ENCODE measurements at regions of chr1 and their contacts with region 1.

Region 1: GRCh38 chr1:235077571-235078479 is 50.8 kb downstream of the TOMM20 start:
- DNase-seq: peak; percentile 92
- ATAC-seq: peak; percentile 80
- H3K4me3 Mint-ChIP-seq: peak overlapping the region; percentile 10
- H3K27ac Mint-ChIP-seq: no peak overlapping the region
- H3K4me1 Mint-ChIP-seq: peaks cover 35% of the 10 kb centered on the region
- H3K27me3 Mint-ChIP-seq: no peaks in the 10 kb centered on the region

Region 2: DNA sequence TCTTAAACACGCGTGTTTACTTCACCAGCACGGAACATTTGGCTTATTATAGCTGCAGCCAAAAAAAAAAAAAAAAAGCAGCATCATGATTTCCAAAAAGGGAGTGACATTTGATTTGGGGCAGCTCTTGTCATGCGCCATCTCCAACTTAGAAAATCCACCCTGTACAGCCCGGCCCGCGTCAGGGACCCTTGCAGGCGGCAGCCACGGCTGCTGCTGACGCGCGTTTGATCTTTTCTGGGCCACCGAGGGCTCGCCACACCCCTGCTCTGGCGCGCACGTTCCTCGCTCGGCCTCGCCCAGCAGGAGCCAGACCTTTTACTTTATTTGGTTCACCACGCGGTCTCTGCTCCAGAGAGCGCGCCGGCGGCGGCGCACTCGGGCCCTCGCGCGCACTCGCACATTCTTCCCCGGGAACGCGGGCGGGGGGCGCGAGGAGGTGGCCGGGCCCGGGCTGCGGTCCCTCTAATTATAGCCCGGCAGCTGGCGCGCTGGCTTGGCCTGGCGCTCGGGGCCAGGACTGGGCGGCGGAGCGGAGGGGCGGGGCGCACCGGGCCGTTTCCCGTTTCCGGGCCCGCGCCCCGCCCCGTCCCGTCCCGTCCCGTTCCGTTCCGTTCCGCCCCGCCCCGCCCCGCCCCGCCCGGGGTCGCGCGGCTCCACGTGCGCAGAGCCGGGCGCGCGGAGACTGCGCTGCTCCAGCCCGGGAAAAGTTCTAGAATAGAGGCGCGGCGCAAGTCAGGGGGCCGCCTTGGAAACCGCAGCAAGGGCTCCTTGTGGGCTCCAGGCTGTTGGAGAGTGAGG is 478.0 kb before region 1 on chr1:
- CTCF ChIA-PET with region 1: interaction called, 38 read pairs
- DNase-seq: peak; percentile 84
- ATAC-seq: peak; percentile 81
- H3K4me3 Mint-ChIP-seq: peak overlapping the region; percentile 85
- H3K27ac Mint-ChIP-seq: peak overlapping the region; percentile 94
- H3K4me1 Mint-ChIP-seq: peaks cover 55% of the 10 kb centered on the region
- H3K27me3 Mint-ChIP-seq: no peaks in the 10 kb centered on the region

Region 3: DNA sequence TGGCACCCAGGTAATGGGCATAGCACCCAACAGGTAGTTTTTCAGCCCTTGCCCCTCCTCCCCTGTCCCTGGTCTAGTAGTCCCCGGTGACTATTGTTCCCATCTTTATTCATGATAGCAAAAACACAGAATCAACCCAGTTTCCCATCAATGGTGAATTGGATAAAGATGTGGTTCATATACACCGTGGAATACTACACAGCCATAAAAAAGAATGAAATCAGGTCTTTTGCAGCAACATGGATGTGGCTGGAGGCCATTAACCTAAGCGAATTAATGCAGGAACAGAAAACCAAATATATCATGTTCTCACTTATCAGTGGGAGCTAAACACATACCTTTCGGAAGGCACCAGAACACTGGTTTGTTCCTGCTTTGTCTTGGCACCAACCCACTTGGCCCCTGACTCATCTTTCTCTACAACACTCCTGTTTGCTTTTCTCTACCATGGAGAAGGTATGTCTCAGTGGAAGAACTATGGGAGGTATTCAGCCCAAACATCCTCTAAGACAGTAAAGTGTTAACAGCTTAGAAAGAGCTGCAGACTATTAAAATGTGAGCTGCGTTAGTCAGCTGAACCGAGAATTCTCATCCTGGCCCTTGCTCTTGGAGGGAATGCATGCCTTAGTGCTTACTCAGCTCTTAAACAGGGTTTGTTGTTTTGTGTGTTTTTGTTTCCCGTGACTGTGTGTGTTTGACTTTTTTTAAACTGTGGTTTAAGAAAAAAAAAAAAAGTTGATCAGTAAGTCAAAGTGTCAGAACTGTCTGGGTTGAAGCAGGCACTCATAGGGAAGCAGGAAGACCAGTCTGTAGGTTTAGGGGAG is 152.2 kb before region 1 on chr1:
- CTCF ChIA-PET with region 1: interaction called, 13 read pairs
- DNase-seq: peak; percentile 40
- ATAC-seq: peak; percentile 21
- H3K4me3 Mint-ChIP-seq: peak overlapping the region; percentile 71
- H3K27ac Mint-ChIP-seq: peak overlapping the region; percentile 98
- H3K4me1 Mint-ChIP-seq: peaks cover 49% of the 10 kb centered on the region
- H3K27me3 Mint-ChIP-seq: no peaks in the 10 kb centered on the region

Region 4: GRCh38 chr1:235011599-235012435 is 66.0 kb before region 1 on chr1:
- CTCF ChIA-PET with region 1: interaction called, 14 read pairs
- DNase-seq: peak; percentile 99
- ATAC-seq: peak; percentile 94
- H3K4me3 Mint-ChIP-seq: peak overlapping the region; percentile 46
- H3K27ac Mint-ChIP-seq: peak overlapping the region; percentile 93
- H3K4me1 Mint-ChIP-seq: peaks cover 80% of the 10 kb centered on the region
- H3K27me3 Mint-ChIP-seq: peaks cover 5% of the 10 kb centered on the region

Region 5: DNA sequence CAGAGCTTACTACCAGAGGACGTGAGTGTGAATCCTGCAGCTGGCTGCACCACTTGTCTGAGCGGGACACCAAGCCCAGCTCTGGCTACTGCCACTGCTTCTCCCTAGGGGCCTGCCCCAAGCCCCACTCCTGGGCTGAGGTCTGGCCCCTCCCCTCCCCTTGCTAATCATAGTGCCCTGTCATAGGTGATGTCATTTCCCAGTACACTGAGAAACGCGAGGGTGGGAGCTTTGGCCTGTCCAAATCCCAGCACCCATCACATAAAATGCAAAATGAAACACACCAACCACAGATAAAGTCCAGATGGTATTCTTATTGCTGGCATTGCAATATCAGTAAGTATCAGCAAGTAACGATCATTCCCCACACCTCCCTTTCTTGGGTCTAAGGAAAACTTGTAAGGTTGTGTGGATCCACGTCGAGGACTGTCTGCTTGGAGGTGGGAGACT is 26.9 kb before region 1 on chr1:
- CTCF ChIA-PET with region 1: no interaction called
- DNase-seq: no peak
- ATAC-seq: no peak
- H3K4me3 Mint-ChIP-seq: no peak overlapping the region
- H3K27ac Mint-ChIP-seq: no peak overlapping the region
- H3K4me1 Mint-ChIP-seq: peaks cover 28% of the 10 kb centered on the region
- H3K27me3 Mint-ChIP-seq: no peaks in the 10 kb centered on the region

Region 6: GRCh38 chr1:235128456-235129328 is 50.9 kb after region 1 on chr1 and contains the start of gene TOMM20:
- CTCF ChIA-PET with region 1: no interaction called
- DNase-seq: peak; percentile 97
- ATAC-seq: peak; percentile 94
- H3K4me3 Mint-ChIP-seq: peak within 1 kb of the TSS; percentile 88
- H3K27ac Mint-ChIP-seq: peak within 1 kb of the TSS; percentile 98
- H3K4me1 Mint-ChIP-seq: peaks cover 38% of the 10 kb centered on the region
- H3K27me3 Mint-ChIP-seq: no peaks in the 10 kb centered on the region
- total RNA-seq, gene TOMM20: 71.1 to 76.7 TPM

Region 7: GRCh38 chr1:235156265-235156664 is 78.4 kb after region 1 on chr1:
- CTCF ChIA-PET with region 1: no interaction called
- DNase-seq: no peak
- ATAC-seq: no peak
- H3K4me3 Mint-ChIP-seq: no peak overlapping the region
- H3K27ac Mint-ChIP-seq: no peak overlapping the region
- H3K4me1 Mint-ChIP-seq: peaks cover 19% of the 10 kb centered on the region
- H3K27me3 Mint-ChIP-seq: no peaks in the 10 kb centered on the region